ENCODE measurements at regions of chr3 and their contacts with region 1.

Region 1: DNA sequence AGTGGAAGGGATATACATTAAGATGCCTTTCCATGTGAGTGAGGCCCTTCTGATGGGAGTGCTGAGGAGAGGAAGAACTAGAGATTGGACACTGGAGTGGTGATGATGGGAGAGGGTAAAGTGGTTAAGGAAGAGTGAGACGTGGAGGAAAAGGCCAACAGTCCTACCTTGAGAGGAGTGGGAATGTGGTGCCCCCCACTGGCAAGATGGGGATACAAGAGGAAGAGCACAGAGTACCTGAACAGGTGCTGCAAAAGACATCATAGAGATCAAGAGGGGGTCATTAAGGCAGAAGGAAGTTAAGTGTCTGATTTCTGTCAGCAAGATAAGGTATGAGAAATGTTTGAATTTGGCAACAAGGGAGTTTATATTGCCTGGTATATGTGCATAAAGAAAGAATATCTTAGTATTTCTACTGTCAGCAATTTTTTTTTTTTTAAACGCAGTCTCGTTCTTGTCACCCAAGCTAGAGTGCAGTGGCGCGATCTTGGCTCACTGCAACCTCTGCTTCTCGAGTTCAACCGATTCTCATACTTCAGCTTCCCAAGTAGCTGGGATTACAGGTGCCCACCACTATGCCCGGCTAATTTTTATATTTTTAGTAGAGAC is 34.0 kb downstream of the ARIH2 start:
- DNase-seq: peak; percentile 21 to 52 (median 33)
- ATAC-seq: peak; percentile 79
- H3K4me3 ChIP-seq: no peak overlapping the region
- H3K4me3 Mint-ChIP-seq: no peak overlapping the region
- H3K27ac ChIP-seq: no peak overlapping the region
- H3K27ac Mint-ChIP-seq: peak overlapping the region in 3 of 9 donors; percentile 2 to 33 (median 13)
- H3K4me1 ChIP-seq: no peaks in the 10 kb centered on the region
- H3K4me1 Mint-ChIP-seq: peaks cover 13 to 35% (median 17%) of the 10 kb centered on the region in 7 donors
- H3K27me3 ChIP-seq: no peaks in the 10 kb centered on the region
- H3K27me3 Mint-ChIP-seq: no peaks in the 10 kb centered on the region

Region 2: GRCh38 chr3:48739955-48740823 is 212.4 kb before region 1 on chr3:
- CTCF ChIA-PET with region 1: interaction called, 21 read pairs
- POLR2A ChIA-PET with region 1: interaction called, 5 read pairs
- intact Hi-C with region 1: loop called (anchors 1 to 5 kb)
- DNase-seq: peak; percentile 8 to 55 (median 35)
- ATAC-seq: peak; percentile 90
- H3K4me3 ChIP-seq: no peak overlapping the region
- H3K4me3 Mint-ChIP-seq: no peak overlapping the region
- H3K27ac ChIP-seq: no peak overlapping the region
- H3K27ac Mint-ChIP-seq: peak overlapping the region in 2 of 9 donors; percentile 1 to 6
- H3K4me1 ChIP-seq: no peaks in the 10 kb centered on the region
- H3K4me1 Mint-ChIP-seq: peaks cover 0 to 9% (median 0%) of the 10 kb centered on the region in 7 donors
- H3K27me3 ChIP-seq: no peaks in the 10 kb centered on the region
- H3K27me3 Mint-ChIP-seq: no peaks in the 10 kb centered on the region

Region 3: DNA sequence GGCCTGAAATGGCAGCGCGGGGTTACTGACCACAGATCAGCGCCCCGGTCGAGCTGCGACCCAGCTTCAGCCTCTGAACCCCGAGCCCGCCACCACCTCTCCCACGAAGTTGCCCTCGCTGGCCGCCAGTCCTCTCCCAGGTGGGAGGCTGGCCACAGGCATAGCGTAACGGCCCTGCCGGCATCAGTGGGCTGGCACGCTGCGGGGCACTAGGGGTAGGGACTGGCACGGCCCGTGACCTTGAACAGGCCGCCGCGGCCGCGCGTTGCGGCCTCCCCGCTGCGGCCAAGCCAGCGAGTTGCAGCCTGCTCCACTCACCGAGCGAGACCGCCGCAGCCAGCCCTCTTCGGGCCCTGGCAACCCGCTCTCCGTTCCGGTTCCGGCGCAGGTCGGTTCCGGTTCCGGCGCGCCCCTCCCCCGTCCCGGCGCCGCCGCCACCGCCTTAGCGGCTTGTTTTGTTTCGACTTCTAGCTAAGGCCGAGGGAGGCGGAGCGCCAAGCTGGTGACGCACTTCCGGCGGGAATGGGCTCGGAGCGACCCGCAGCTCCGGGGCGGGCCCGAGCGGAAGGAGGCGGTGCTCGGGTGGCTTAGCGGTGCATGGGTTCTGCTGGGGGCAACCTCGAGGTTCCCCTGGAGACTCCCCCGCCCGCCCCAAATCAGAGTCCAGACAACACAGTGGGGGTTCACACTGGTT is 168.0 kb after region 1 on chr3 and contains the start of gene USP19:
- CTCF ChIA-PET with region 1: no interaction called
- POLR2A ChIA-PET with region 1: no interaction called
- intact Hi-C with region 1: no loop called
- DNase-seq: peak; percentile 92 to 96 (median 95)
- ATAC-seq: peak; percentile 96
- H3K4me3 ChIP-seq: peak within 1 kb of the TSS; percentile 70
- H3K4me3 Mint-ChIP-seq: peak within 1 kb of the TSS; percentile 80 to 97 (median 88)
- H3K27ac ChIP-seq: peak within 1 kb of the TSS; percentile 92
- H3K27ac Mint-ChIP-seq: peak within 1 kb of the TSS; percentile 83 to 96 (median 94)
- H3K4me1 ChIP-seq: peaks cover 17 to 27% of the 10 kb centered on the region in 2 donors
- H3K4me1 Mint-ChIP-seq: peaks cover 0 to 31% (median 25%) of the 10 kb centered on the region in 7 donors
- H3K27me3 ChIP-seq: no peaks in the 10 kb centered on the region
- H3K27me3 Mint-ChIP-seq: no peaks in the 10 kb centered on the region
- total RNA-seq, gene USP19: 60.0 to 106 (median 78.0) TPM